ENCODE measurements at regions of chr4 and their contacts with region 1.

Region 1: GRCh38 chr4:80202190-80202711 is 4.9 kb downstream of the PRDM8 start:
- DNase-seq: peak; percentile 79
- H3K4me3 Mint-ChIP-seq: peak overlapping the region; percentile 70
- H3K27ac Mint-ChIP-seq: no peak overlapping the region
- H3K4me1 Mint-ChIP-seq: peaks cover 20% of the 10 kb centered on the region
- H3K27me3 Mint-ChIP-seq: peaks cover 20% of the 10 kb centered on the region

Region 2: GRCh38 chr4:79917246-79917645 is 285.0 kb before region 1 on chr4:
- CTCF ChIA-PET with region 1: interaction called, 3 read pairs
- intact Hi-C with region 1: loop called (anchors 5 kb)
- DNase-seq: peak; percentile 67
- H3K4me3 Mint-ChIP-seq: no peak overlapping the region
- H3K27ac Mint-ChIP-seq: no peak overlapping the region
- H3K4me1 Mint-ChIP-seq: peaks cover 2% of the 10 kb centered on the region
- H3K27me3 Mint-ChIP-seq: no peaks in the 10 kb centered on the region

Region 3: GRCh38 chr4:80335554-80336358 is 133.5 kb after region 1 on chr4 and contains the start of gene CFAP299:
- CTCF ChIA-PET with region 1: interaction called, 3 read pairs
- intact Hi-C with region 1: loop called (anchors 5 kb)
- DNase-seq: peak; percentile 84
- H3K4me3 Mint-ChIP-seq: peak within 1 kb of the TSS; percentile 77
- H3K27ac Mint-ChIP-seq: no peak within 1 kb of the TSS
- H3K4me1 Mint-ChIP-seq: peaks cover 5% of the 10 kb centered on the region
- H3K27me3 Mint-ChIP-seq: peaks cover 9% of the 10 kb centered on the region
- total RNA-seq, gene CFAP299: not detected